MCF 10A (cell line): ENCODE measurements at regions of chr3 and their contacts with region 1.

Region 1: DNA sequence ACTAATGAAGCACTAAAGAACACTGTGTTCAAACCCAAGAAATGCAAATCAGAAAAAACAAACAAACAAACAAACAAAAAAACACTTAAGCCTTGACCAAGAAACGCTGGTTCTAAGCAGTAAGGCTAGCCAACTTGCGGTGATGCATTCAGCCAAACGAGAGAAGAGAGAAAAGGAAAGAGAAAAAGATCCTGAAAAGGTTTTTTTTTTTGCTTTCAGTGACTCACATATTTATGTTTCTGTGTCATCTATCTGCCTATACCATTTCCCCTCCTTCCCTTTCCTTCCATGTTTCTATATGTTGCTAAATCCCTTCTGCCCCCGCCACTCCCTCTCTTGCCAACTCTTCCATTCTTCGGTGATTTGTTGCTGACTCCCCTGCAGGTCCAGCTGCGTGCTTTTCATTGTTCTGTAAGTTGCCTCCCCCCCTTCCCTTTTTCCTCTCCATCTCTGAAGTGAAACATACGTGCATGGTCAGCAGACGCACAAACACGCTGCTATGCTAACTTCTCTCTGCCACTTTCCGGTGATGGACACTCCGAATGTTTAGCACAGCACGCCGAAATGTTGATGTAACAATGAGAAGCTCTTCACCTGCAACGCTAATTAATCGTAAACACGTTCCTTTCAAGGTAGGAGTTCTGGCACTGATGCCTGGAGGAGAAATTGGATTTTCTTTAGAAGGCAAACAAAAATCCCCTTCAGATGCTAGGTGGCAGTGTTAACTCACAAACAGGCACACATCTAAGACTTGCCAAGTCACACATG is 154.4 kb downstream of the TUSC7 start:
- DNase-seq: peak; percentile 51
- H3K4me3 Mint-ChIP-seq: no peak overlapping the region
- H3K27ac Mint-ChIP-seq: no peak overlapping the region
- H3K4me1 Mint-ChIP-seq: no peaks in the 10 kb centered on the region
- H3K27me3 Mint-ChIP-seq: no peaks in the 10 kb centered on the region
- CTCF ChIP-seq: peak; percentile 46

Region 2: DNA sequence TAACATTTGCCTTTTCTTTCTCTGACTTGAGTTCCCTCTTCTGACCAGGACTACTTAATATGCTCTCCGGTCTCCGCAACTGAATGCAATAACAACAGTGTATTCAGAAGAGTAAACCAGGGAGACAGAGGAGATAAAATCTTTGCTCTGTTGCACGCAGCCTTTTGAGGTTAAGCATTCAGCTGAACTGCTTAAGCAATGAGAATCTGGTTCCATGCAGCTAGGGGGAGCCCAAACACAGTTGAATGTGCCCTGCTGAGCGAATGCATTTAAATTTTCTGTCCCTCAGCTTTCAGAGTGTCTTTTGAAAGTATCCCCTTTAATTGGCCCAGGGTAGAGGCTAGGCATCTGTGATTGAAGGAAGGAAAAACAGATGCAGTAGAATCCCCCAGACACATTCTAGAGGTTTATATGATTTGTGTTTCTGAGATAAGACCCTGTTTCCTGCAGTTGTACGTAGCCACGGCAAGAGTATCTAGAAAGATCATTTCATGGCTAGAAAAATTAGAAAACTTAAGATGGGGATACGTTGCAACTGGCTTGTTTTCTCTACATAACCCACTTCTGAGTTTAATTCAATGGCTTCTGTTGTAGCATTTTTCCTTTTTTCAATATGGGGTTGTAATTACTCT is 155.2 kb after region 1 on chr3:
- CTCF ChIA-PET with region 1: interaction called, 4 read pairs
- POLR2A ChIA-PET with region 1: no interaction called
- intact Hi-C with region 1: loop called (anchors 5 kb)
- DNase-seq: peak; percentile 60
- H3K4me3 Mint-ChIP-seq: no peak overlapping the region
- H3K27ac Mint-ChIP-seq: no peak overlapping the region
- H3K4me1 Mint-ChIP-seq: no peaks in the 10 kb centered on the region
- H3K27me3 Mint-ChIP-seq: peaks cover 83% of the 10 kb centered on the region
- CTCF ChIP-seq: peak; percentile 74